ENCODE measurements at regions of chr6 and their contacts with region 1.

Region 1: GRCh38 chr6:45714741-45715507 is 300.7 kb downstream of the CLIC5 start:
- DNase-seq: peak; percentile 61
- H3K4me3 Mint-ChIP-seq: no peak overlapping the region
- H3K27ac Mint-ChIP-seq: no peak overlapping the region
- H3K4me1 Mint-ChIP-seq: peaks cover 23% of the 10 kb centered on the region
- H3K27me3 Mint-ChIP-seq: peaks cover 25% of the 10 kb centered on the region
- CTCF ChIP-seq: peak; percentile 54

Region 2: GRCh38 chr6:44630125-44631028 is 1084.5 kb before region 1 on chr6:
- CTCF ChIA-PET with region 1: interaction called, 10 read pairs
- intact Hi-C with region 1: loop called (anchors 2 kb)
- DNase-seq: peak; percentile 70
- H3K4me3 Mint-ChIP-seq: no peak overlapping the region
- H3K27ac Mint-ChIP-seq: no peak overlapping the region
- H3K4me1 Mint-ChIP-seq: no peaks in the 10 kb centered on the region
- H3K27me3 Mint-ChIP-seq: peaks cover 57% of the 10 kb centered on the region
- CTCF ChIP-seq: peak; percentile 80

Region 3: GRCh38 chr6:45086360-45087084 is 628.4 kb before region 1 on chr6:
- CTCF ChIA-PET with region 1: no interaction called
- intact Hi-C with region 1: loop called (anchors 5 kb)
- DNase-seq: no peak
- H3K4me3 Mint-ChIP-seq: no peak overlapping the region
- H3K27ac Mint-ChIP-seq: no peak overlapping the region
- H3K4me1 Mint-ChIP-seq: no peaks in the 10 kb centered on the region
- H3K27me3 Mint-ChIP-seq: no peaks in the 10 kb centered on the region
- CTCF ChIP-seq: no peak

Region 4: GRCh38 chr6:45421709-45422502 is 293.0 kb before region 1 on chr6:
- CTCF ChIA-PET with region 1: interaction called, 15 read pairs
- intact Hi-C with region 1: loop called (anchors 1 kb)
- DNase-seq: peak; percentile 61
- H3K4me3 Mint-ChIP-seq: peak overlapping the region; percentile 82
- H3K27ac Mint-ChIP-seq: peak overlapping the region; percentile 35
- H3K4me1 Mint-ChIP-seq: no peaks in the 10 kb centered on the region
- H3K27me3 Mint-ChIP-seq: peaks cover 50% of the 10 kb centered on the region
- CTCF ChIP-seq: no peak

Region 5: GRCh38 chr6:45586216-45587171 is 128.4 kb before region 1 on chr6:
- CTCF ChIA-PET with region 1: no interaction called
- intact Hi-C with region 1: no loop called
- DNase-seq: no peak
- H3K4me3 Mint-ChIP-seq: no peak overlapping the region
- H3K27ac Mint-ChIP-seq: peak overlapping the region; percentile 12
- H3K4me1 Mint-ChIP-seq: peaks cover 44% of the 10 kb centered on the region
- H3K27me3 Mint-ChIP-seq: no peaks in the 10 kb centered on the region
- CTCF ChIP-seq: no peak

Region 6: DNA sequence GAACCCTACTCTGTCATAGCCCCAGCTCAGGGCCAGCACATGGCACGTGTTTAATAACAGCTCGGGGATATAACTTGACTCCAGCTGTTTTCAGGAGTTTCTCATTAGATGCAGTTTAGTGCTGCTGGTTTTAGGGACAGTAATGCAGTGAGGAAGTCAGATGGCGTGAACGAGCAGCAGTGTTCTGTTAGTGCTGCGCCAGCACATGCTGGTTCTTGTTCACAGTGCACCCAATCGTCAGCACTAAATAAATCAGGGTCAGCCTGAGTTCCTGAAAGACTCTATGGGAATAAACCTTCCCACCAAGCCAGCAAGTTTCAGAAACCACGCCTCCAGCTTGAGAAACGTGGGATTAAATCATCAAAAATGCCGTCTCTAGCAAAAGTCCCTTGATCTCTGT is 101.3 kb before region 1 on chr6:
- CTCF ChIA-PET with region 1: interaction called, 7 read pairs
- intact Hi-C with region 1: loop called (anchors 5 kb)
- DNase-seq: no peak
- H3K4me3 Mint-ChIP-seq: no peak overlapping the region
- H3K27ac Mint-ChIP-seq: no peak overlapping the region
- H3K4me1 Mint-ChIP-seq: peaks cover 42% of the 10 kb centered on the region
- H3K27me3 Mint-ChIP-seq: no peaks in the 10 kb centered on the region
- CTCF ChIP-seq: no peak

Region 7: GRCh38 chr6:45696738-45697137 is 18.2 kb before region 1 on chr6:
- CTCF ChIA-PET with region 1: no interaction called
- intact Hi-C with region 1: no loop called
- DNase-seq: no peak
- H3K4me3 Mint-ChIP-seq: no peak overlapping the region
- H3K27ac Mint-ChIP-seq: no peak overlapping the region
- H3K4me1 Mint-ChIP-seq: peaks cover under 1% of the 10 kb centered on the region
- H3K27me3 Mint-ChIP-seq: no peaks in the 10 kb centered on the region
- CTCF ChIP-seq: no peak

Measured in Calu3 (cell line).